ENCODE measurements at regions of chr5 and their contacts with region 1.

Region 1: GRCh38 chr5:43484106-43484849 is 613 bp upstream of the TMEM267 start:
- H3K4me3 ChIP-seq: peak overlapping the region; percentile 81
- H3K27ac ChIP-seq: peak overlapping the region; percentile 87
- H3K4me1 ChIP-seq: peaks cover 4% of the 10 kb centered on the region; the same call in 1 of the 2 replicates
- CTCF ChIP-seq: peak; percentile 91

Region 2: GRCh38 chr5:43120720-43121564 is 363.3 kb before region 1 on chr5 and contains the start of gene ZNF131:
- CTCF ChIA-PET with region 1: interaction called, 5 read pairs
- POLR2A ChIA-PET with region 1: interaction called, 40 read pairs
- H3K4me3 ChIP-seq: peak within 1 kb of the TSS; percentile 86
- H3K27ac ChIP-seq: peak within 1 kb of the TSS; percentile 92
- H3K4me1 ChIP-seq: peaks cover 11% of the 10 kb centered on the region; the same call in 1 of the 2 replicates
- CTCF ChIP-seq: no peak; the same call in 1 of the 2 replicates

Region 3: GRCh38 chr5:43313035-43313853 is 171.0 kb before region 1 on chr5 and contains the start of gene HMGCS1:
- CTCF ChIA-PET with region 1: interaction called, 5 read pairs
- POLR2A ChIA-PET with region 1: interaction called, 43 read pairs
- H3K4me3 ChIP-seq: peak within 1 kb of the TSS; percentile 90
- H3K27ac ChIP-seq: peak within 1 kb of the TSS; percentile 83
- H3K4me1 ChIP-seq: peaks cover 19% of the 10 kb centered on the region
- CTCF ChIP-seq: peak; percentile 97

Region 4: GRCh38 chr5:43348207-43348606 is 136.1 kb before region 1 on chr5:
- CTCF ChIA-PET with region 1: no interaction called
- POLR2A ChIA-PET with region 1: no interaction called
- H3K4me3 ChIP-seq: no peak overlapping the region
- H3K27ac ChIP-seq: no peak overlapping the region
- H3K4me1 ChIP-seq: no peaks in the 10 kb centered on the region
- CTCF ChIP-seq: no peak

Region 5: DNA sequence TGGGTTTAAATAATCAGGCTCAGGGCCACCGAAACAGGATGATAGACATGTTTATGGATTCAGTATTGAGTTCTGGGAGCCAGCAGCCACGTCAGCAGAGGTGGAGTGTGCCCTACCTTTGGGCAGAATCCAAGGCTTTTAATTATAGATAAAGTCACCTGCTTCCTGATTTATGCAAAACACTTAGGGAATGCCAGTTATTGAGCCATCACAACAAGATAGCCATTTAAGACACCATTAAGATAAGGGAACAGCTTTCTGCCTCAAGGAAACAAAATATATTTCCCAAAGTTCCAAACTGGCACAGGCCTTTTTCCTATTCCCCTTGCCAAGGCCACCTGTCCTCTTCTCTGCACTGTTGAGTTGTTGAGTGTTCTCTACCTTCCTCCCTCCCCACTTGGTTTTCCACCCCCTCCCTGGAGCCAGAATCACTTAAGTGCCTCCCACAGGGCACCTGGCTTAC is 74.4 kb before region 1 on chr5:
- CTCF ChIA-PET with region 1: interaction called, 12 read pairs
- POLR2A ChIA-PET with region 1: interaction called, 7 read pairs
- H3K4me3 ChIP-seq: no peak overlapping the region
- H3K27ac ChIP-seq: peak overlapping the region; percentile 19; the same call in 1 of the 2 replicates
- H3K4me1 ChIP-seq: peaks cover 11% of the 10 kb centered on the region
- CTCF ChIP-seq: no peak

Region 6: DNA sequence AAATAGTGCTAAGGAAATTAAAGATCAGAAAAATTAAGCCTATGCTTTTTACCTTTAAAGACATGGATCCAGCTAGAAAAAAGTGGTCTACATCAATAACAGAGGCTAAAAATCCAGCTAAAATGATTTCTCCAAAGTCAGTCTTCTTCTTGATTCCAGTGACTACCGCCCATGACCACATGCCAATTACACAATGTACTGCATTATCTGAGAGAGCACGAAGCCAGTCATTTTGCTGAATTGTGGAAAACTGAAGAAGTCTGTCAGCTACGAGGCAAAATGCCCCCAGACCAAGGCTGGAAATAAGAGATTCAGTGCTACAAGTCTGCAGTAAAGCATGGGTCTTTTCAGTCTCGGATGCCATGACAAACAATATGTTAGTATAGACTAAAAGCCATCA is 30.7 kb before region 1 on chr5:
- CTCF ChIA-PET with region 1: interaction called, 9 read pairs
- POLR2A ChIA-PET with region 1: interaction called, 11 read pairs
- H3K4me3 ChIP-seq: no peak overlapping the region
- H3K27ac ChIP-seq: no peak overlapping the region
- H3K4me1 ChIP-seq: no peaks in the 10 kb centered on the region
- CTCF ChIP-seq: no peak

Region 7: DNA sequence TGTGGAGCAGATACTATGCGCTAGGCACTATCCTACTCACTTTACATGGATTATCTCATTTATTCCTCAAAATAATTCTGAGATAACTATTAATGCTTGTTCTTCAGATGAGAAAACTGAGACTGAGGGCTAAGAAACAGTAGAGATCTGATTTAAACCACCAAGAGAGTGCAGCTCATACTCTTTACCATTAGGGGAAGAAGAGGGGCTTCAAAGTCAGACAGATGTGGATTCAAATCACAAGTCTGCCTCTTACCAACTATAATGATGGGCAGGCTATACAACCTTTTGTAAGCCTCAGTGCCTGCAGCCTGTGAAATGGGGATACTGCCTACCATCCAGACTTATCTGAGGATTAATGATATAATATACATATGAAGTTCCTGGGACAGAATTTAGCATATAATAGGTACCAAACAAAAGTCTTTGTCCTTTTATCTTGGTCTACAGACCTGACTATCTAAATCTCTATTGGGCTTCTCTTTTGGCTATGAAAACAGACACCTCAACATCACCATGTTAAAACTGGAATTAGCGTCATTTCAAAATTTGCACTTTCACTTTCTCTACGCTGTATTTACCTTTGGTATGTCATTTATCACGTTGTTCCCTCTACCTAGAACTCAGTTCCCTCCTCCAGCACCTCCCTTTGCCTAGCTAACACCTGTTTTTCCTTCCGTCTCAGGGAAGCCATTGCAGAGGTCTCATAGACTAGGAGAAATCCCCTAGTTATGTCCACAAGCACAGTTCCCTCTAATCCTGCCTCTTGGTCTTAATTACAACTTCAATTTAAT is 13.2 kb after region 1 on chr5:
- CTCF ChIA-PET with region 1: interaction called, 8 read pairs
- POLR2A ChIA-PET with region 1: interaction called, 12 read pairs
- H3K4me3 ChIP-seq: no peak overlapping the region
- H3K27ac ChIP-seq: no peak overlapping the region
- H3K4me1 ChIP-seq: no peaks in the 10 kb centered on the region
- CTCF ChIP-seq: no peak

Region 8: DNA sequence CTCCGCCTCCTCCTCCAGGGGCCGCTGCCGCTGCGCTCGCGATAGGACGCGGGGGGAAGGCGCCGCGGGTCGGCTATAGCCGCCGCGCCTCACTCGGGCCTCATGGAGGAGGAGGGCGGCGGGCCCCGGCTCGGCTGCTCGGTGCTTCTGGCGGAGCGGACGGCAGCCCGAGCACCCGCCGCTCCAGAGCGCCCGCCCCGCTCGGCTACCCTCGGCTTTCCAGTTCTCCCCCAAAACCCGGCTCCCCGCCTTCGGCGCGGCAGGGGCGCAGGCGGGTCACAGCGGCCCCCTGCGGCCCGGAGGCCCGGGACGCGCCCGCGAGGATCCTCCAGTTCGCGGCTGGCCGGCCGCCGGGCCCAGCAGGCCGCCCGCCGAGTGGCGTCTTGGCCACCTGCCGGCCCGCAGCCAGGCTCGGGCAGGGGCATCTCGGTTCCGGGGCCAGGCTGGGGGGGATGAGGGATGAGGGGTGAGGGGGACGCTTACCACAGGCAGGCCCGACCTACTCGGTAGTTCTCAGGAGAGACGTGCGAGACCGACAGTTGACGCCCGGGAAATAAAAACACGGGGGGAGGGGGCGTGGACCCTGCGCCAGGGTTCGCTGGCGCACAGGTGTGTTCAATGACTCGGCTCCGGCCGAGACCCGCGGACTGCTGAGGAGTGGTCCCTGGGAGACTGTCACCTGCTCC is 72.7 kb after region 1 on chr5 and contains the start of gene PAIP1:
- CTCF ChIA-PET with region 1: interaction called, 3 read pairs
- POLR2A ChIA-PET with region 1: interaction called, 15 read pairs
- H3K4me3 ChIP-seq: peak within 1 kb of the TSS; percentile 100
- H3K27ac ChIP-seq: peak within 1 kb of the TSS; percentile 97
- H3K4me1 ChIP-seq: peaks cover 18% of the 10 kb centered on the region; the same call in 1 of the 2 replicates
- CTCF ChIP-seq: peak; percentile 39; the same call in 1 of the 2 replicates

Region 9: DNA sequence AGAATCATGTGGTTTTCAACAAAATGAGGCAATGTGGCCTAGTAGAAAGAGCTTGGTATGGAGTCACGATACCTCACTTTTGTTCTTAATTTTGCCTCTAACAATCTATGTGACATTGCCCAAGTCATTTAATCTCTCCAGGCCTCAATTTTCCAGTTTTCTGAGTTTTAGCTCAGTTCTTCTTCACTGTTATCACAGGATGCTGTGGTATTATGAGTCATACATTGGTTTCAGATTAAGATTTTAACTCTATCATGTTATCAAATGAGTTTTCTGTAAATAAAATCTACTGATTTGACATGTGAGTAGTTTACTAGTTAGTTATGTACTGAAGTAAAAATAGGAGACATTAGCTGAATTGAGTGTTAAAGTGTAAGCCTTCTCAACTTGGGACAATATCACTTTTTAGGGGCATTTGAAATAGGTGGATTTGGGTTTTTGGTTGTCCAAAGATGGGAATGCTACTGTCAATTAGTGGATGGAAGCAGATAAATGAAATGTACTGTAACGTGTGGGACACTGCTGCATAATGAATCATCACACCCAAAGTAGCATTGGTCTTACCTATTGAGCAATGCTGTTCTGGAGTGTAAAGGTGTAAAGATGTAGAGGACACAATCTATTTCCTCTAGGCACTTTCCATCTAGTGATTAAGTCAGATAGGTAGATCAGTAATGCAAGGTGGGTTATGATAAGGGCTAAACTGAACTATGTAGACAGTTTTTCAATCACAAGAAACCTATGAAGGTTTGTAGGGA is 192.0 kb after region 1 on chr5:
- CTCF ChIA-PET with region 1: no interaction called
- POLR2A ChIA-PET with region 1: no interaction called
- H3K4me3 ChIP-seq: no peak overlapping the region
- H3K27ac ChIP-seq: no peak overlapping the region
- H3K4me1 ChIP-seq: no peaks in the 10 kb centered on the region
- CTCF ChIP-seq: no peak